GM12878 (cell line): ENCODE measurements at regions of chr10 and their contacts with region 1.

Region 1: DNA sequence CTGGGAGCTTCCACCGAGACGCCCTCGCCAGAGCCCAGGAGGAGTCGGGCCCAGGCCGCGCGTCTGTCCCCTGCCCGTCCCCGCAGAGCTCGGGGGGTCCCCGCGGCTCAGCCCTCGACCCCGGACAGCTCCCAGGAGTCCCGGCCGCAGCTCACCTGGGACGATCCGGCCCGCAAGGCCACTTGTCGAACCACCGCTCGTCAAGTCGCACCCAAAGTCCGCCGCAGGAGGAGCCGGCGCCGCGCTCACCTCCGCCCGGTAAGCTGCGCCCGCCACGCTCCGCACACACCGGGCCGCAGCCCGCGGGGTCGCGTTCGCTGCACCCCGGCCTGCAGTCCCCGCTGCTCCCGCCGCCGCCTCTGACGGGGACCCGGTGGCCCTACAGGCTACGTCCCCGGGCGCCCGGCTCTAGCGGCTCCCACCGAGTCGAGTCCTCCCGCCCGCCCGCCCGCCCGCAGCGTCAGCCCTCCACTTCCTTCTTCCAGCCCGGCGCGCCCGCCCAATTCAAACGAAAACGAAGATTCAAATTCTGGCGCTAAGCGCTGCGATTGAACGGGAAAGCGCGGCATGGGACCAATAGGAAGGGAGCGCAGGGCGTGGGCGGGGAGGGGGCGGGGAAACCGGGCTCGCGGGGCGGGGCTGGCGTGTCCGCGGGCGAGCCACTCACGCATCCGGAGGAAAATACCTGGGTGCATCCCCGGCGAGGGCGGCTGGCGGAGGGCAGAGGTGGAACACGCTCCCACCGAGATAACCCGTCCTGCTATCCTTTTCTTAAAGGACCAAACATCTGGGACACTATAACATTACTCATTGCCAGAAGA is at the start of gene MKI67:
- DNase-seq: peak; percentile 71
- ATAC-seq: peak; percentile 88
- H3K4me3 ChIP-seq: peak within 1 kb of the TSS; percentile 84
- H3K27ac ChIP-seq: peak within 1 kb of the TSS; percentile 89
- H3K4me1 ChIP-seq: peaks cover 6% of the 10 kb centered on the region
- H3K27me3 ChIP-seq: no peaks in the 10 kb centered on the region
- CTCF ChIP-seq: no peak
- EP300 ChIP-seq: no peak
- POLR2A ChIP-seq: peak; percentile 79
- RAD21 ChIP-seq: no peak
- polyA plus RNA-seq, gene MKI67: 22.3 to 37.5 TPM

Region 2: GRCh38 chr10:128064108-128064969 is 61.8 kb before region 1 on chr10:
- CTCF ChIA-PET with region 1: interaction called, 9 read pairs
- POLR2A ChIA-PET with region 1: interaction called, 5 read pairs
- RAD21 ChIA-PET with region 1: interaction called, 10 read pairs
- SMC1A ChIA-PET with region 1: interaction called, 4 read pairs
- in situ Hi-C with region 1: no loop called
- intact Hi-C with region 1: no loop called
- DNase-seq: peak; percentile 80
- ATAC-seq: peak; percentile 79
- H3K4me3 ChIP-seq: no peak overlapping the region
- H3K27ac ChIP-seq: peak overlapping the region; percentile 76
- H3K4me1 ChIP-seq: peaks cover 36% of the 10 kb centered on the region
- H3K27me3 ChIP-seq: no peaks in the 10 kb centered on the region
- CTCF ChIP-seq: no peak
- EP300 ChIP-seq: peak; percentile 49; a peak in 2 of 4 replicates
- POLR2A ChIP-seq: no peak
- RAD21 ChIP-seq: no peak

Region 3: DNA sequence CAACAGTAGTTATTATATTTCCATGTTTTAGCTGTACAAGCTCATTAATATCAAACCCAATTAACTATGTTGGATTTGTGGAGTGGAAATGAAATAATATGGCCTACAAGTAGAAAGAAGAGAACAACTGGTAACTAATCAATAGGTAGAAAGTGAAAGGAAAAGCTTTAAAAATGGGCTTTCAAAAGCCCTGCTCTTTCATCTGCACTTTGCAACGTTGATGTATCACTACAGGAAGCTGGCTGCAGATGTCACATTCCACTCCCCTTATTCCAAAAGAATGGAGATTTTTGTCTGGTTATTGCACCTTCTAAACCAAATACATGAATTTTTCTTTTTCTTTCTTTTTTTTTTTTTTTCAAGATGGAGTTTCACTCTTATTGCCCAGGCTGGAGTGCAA is 11.7 kb after region 1 on chr10:
- CTCF ChIA-PET with region 1: interaction called, 6 read pairs
- POLR2A ChIA-PET with region 1: interaction called, 5 read pairs
- RAD21 ChIA-PET with region 1: interaction called, 10 read pairs
- SMC1A ChIA-PET with region 1: interaction called, 6 read pairs
- in situ Hi-C with region 1: no loop called
- intact Hi-C with region 1: no loop called
- DNase-seq: no peak
- ATAC-seq: peak; percentile 67
- H3K4me3 ChIP-seq: no peak overlapping the region
- H3K27ac ChIP-seq: no peak overlapping the region
- H3K4me1 ChIP-seq: no peaks in the 10 kb centered on the region
- H3K27me3 ChIP-seq: no peaks in the 10 kb centered on the region
- CTCF ChIP-seq: no peak
- EP300 ChIP-seq: no peak
- POLR2A ChIP-seq: no peak
- RAD21 ChIP-seq: no peak